Common myeloid progenitor, CD34-positive (primary cell): ENCODE measurements at regions of chr10 and their contacts with region 1.

Region 1: DNA sequence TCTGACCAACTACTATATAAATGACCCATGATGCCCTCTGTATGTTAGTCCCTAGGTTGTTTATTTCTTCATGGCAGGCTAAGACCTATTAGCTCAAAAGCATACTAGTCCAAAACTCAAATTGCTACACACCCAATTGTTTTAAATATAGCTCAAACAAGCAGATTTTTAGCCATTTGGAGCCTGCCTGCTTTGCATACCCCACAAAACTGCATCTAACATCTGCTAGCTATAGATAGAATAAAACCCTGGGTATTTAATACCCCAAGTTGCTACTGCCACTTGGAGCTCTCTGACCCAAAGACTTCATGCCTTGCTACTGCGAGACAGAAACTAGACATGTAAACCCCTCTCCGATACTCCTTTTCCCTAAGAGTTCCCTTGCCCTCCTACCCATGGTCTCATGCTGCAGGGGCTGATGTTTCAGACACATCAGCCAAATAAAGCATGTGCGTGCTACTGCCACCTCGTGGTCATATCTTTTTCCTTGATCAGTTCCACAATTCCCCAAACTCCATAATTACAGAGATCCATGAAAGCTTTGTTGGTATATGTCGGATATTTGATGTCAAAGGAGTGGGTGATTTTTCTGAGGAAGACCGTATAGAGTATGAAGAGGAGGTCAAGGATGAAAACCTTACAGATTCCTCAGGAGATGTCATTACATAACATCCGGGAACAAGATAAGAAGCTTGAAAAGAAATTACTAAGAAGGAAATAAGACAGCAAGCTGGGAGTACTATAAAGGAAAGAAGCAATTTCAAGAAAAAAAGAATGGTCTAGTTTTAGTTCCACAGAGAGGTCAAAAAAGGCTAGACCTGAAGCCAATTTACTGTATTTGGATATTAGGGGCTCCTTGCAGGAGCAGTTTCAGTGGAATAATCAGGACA is 386.6 kb downstream of the SH2D4B start:
- DNase-seq: peak; percentile 19 to 54 (median 44)
- H3K4me3 ChIP-seq: no peak overlapping the region
- H3K27ac ChIP-seq: no peak overlapping the region
- H3K4me1 ChIP-seq: no peaks in the 10 kb centered on the region
- H3K27me3 ChIP-seq: no peaks in the 10 kb centered on the region

Region 2: GRCh38 chr10:80662577-80663261 is 261.6 kb before region 1 on chr10:
- CTCF ChIA-PET with region 1: interaction called, 10 read pairs
- POLR2A ChIA-PET with region 1: no interaction called
- DNase-seq: peak; percentile 44 to 63 (median 61)
- H3K4me3 ChIP-seq: peak overlapping the region in 6 of 7 experiments; percentile 42 to 79 (median 56)
- H3K27ac ChIP-seq: no peak overlapping the region
- H3K4me1 ChIP-seq: peaks cover 7 to 23% (median 19%) of the 10 kb centered on the region in 4 experiments
- H3K27me3 ChIP-seq: no peaks in the 10 kb centered on the region

Region 3: DNA sequence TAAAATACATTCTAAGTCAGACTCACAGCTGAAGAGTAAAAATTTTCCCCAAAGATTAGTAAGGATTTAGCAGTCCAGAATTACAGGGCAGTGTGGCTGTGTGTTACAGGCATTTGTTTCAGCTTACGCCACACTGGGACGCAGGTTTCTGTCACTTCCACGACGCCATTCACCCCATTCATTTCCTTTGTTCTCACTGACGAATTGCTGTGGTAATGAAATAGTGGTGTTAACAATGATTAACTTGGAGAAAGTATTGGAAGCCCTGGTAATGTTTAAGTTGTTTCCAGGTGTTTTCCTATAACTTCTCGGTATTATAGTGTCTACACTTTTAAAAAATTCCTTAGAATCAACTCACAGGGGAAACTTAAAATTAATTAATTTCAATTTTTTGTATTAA is 15.7 kb before region 1 on chr10:
- CTCF ChIA-PET with region 1: interaction called, 23 read pairs
- POLR2A ChIA-PET with region 1: no interaction called
- DNase-seq: no peak
- H3K4me3 ChIP-seq: no peak overlapping the region
- H3K27ac ChIP-seq: no peak overlapping the region
- H3K4me1 ChIP-seq: no peaks in the 10 kb centered on the region
- H3K27me3 ChIP-seq: no peaks in the 10 kb centered on the region

Region 4: GRCh38 chr10:80945264-80945880 is 21.1 kb after region 1 on chr10:
- CTCF ChIA-PET with region 1: interaction called, 23 read pairs
- POLR2A ChIA-PET with region 1: no interaction called
- DNase-seq: peak; percentile 10 to 32 (median 25)
- H3K4me3 ChIP-seq: peak overlapping the region in 1 of 7 experiments; percentile 9
- H3K27ac ChIP-seq: no peak overlapping the region
- H3K4me1 ChIP-seq: peaks cover 0 to 24% (median 12%) of the 10 kb centered on the region in 4 experiments
- H3K27me3 ChIP-seq: peaks cover 0 to 3% (median 0%) of the 10 kb centered on the region in 5 experiments